AG04450 (cell line): ENCODE measurements at regions of chr7 and their contacts with region 1.

Region 1: GRCh38 chr7:156764016-156764669 is 123.6 kb downstream of the RNF32 start:
- DNase-seq: peak; percentile 51
- H3K4me3 ChIP-seq: no peak overlapping the region
- H3K27ac ChIP-seq: no peak overlapping the region
- H3K27me3 ChIP-seq: no peaks in the 10 kb centered on the region
- CTCF ChIP-seq: peak; percentile 96

Region 2: DNA sequence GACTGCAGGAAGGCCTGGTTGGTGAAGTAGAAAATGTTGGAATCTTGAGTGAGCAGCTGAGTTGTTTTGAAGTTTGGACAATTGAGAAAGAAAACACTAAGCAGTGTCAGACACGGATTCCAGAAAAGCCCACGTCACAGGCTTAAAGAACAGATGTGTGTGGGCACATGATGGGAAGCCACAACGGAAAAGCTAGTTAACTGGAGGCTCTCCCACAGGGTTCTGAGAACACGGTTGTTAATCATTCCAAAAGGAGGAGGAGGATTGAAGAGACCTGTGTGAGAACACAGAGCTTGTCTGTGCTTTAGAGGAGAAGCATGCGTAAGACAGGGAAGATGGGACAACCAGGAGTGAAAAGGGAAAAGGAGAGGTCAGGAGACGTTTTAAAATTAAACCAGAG is 994.4 kb before region 1 on chr7:
- CTCF ChIA-PET with region 1: interaction called, 10 read pairs
- POLR2A ChIA-PET with region 1: no interaction called
- DNase-seq: no peak
- H3K4me3 ChIP-seq: no peak overlapping the region
- H3K27ac ChIP-seq: no peak overlapping the region
- H3K27me3 ChIP-seq: no peaks in the 10 kb centered on the region
- CTCF ChIP-seq: no peak

Region 3: DNA sequence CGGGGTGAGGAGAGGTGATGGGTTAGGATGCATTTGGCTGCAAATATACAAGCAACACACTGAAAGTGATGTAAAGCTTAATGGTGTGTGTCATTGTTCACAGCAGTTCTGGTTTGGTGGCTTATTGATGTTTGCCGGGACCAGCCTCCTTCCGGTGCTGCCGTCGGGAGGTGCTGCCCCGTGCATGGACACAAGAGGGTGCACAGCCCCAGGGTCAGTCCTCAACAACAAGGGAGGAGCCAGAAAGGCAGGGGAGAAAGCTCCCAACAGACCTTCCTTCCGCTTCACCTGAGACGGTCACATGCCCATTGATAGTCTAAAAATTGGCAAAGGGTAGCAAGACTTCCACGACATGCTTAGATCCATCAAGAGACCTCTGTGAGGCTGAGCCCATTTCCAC is 114.1 kb before region 1 on chr7:
- CTCF ChIA-PET with region 1: interaction called, 13 read pairs
- POLR2A ChIA-PET with region 1: no interaction called
- DNase-seq: no peak
- H3K4me3 ChIP-seq: no peak overlapping the region
- H3K27ac ChIP-seq: no peak overlapping the region
- H3K27me3 ChIP-seq: no peaks in the 10 kb centered on the region
- CTCF ChIP-seq: peak; percentile 39; the same call in 1 of the 2 replicates

Region 4: DNA sequence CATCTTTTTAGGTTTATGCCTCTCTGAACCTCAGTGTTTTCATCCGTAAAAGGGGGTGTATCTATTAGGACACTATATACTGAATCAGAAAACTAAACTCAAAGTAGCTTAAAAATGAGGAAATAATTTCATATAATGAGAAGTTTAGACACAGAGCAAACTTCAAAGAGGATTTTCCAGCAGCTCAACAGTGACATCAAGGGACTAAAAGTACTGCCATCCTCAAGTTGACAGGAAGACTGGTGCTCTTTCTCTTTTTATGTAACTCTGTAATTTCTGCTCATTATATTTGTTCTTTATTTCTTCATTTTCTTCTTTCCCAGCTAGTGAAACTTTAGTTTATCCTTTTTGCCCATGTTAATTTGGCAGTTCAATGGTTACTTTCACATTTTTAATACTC is 20.8 kb before region 1 on chr7:
- CTCF ChIA-PET with region 1: no interaction called
- POLR2A ChIA-PET with region 1: no interaction called
- DNase-seq: no peak
- H3K4me3 ChIP-seq: no peak overlapping the region
- H3K27ac ChIP-seq: no peak overlapping the region
- H3K27me3 ChIP-seq: no peaks in the 10 kb centered on the region
- CTCF ChIP-seq: no peak

Region 5: GRCh38 chr7:156827587-156828203 is 63.6 kb after region 1 on chr7:
- CTCF ChIA-PET with region 1: no interaction called
- POLR2A ChIA-PET with region 1: no interaction called
- DNase-seq: no peak
- H3K4me3 ChIP-seq: no peak overlapping the region
- H3K27ac ChIP-seq: no peak overlapping the region
- H3K27me3 ChIP-seq: no peaks in the 10 kb centered on the region
- CTCF ChIP-seq: peak; percentile 72